Common myeloid progenitor, CD34-positive (primary cell): ENCODE measurements at regions of chr11 and their contacts with region 1.

Region 1: GRCh38 chr11:120952461-120953434 is 71.2 kb upstream of the TBCEL start:
- DNase-seq: peak; percentile 78 to 97 (median 95)
- H3K4me3 ChIP-seq: peak overlapping the region in 6 of 7 experiments; percentile 8 to 74 (median 50)
- H3K27ac ChIP-seq: no peak overlapping the region
- H3K4me1 ChIP-seq: peaks cover 0 to 24% (median 14%) of the 10 kb centered on the region in 4 experiments
- H3K27me3 ChIP-seq: peaks cover 0 to 10% (median 3%) of the 10 kb centered on the region in 5 experiments

Region 2: GRCh38 chr11:120883404-120884080 is 69.2 kb before region 1 on chr11:
- CTCF ChIA-PET with region 1: no interaction called
- POLR2A ChIA-PET with region 1: no interaction called
- DNase-seq: no peak
- H3K4me3 ChIP-seq: no peak overlapping the region
- H3K27ac ChIP-seq: no peak overlapping the region
- H3K4me1 ChIP-seq: no peaks in the 10 kb centered on the region
- H3K27me3 ChIP-seq: peaks cover 0 to 30% (median 23%) of the 10 kb centered on the region in 5 experiments

Region 3: GRCh38 chr11:120929664-120930154 is 23.0 kb before region 1 on chr11:
- CTCF ChIA-PET with region 1: interaction called, 31 read pairs
- POLR2A ChIA-PET with region 1: no interaction called
- DNase-seq: peak; percentile 72 to 83 (median 81)
- H3K4me3 ChIP-seq: no peak overlapping the region
- H3K27ac ChIP-seq: no peak overlapping the region
- H3K4me1 ChIP-seq: no peaks in the 10 kb centered on the region
- H3K27me3 ChIP-seq: peaks cover 0 to 2% (median 0%) of the 10 kb centered on the region in 5 experiments

Region 4: GRCh38 chr11:120936356-120936755 is 16.4 kb before region 1 on chr11:
- CTCF ChIA-PET with region 1: interaction called, 31 read pairs
- POLR2A ChIA-PET with region 1: no interaction called
- DNase-seq: no peak
- H3K4me3 ChIP-seq: no peak overlapping the region
- H3K27ac ChIP-seq: no peak overlapping the region
- H3K4me1 ChIP-seq: no peaks in the 10 kb centered on the region
- H3K27me3 ChIP-seq: peaks cover 0 to 20% (median 4%) of the 10 kb centered on the region in 5 experiments